Dendritic cell treated with granulocyte-macrophage colony-stimulating factor and Interleukin-4, amounts not matched to agents 40 ng/mL and 50 ng/mL, for 4 days (primary cell): ENCODE measurements at regions of chr5 and their contacts with region 1.

Region 1: GRCh38 chr5:181159286-181159829 is 12.0 kb downstream of the OR2V2 start:
- H3K4me3 Mint-ChIP-seq: no peak overlapping the region
- H3K27ac Mint-ChIP-seq: peak overlapping the region; percentile 64
- H3K4me1 Mint-ChIP-seq: peaks cover 26% of the 10 kb centered on the region
- H3K27me3 Mint-ChIP-seq: peaks cover 39% of the 10 kb centered on the region

Region 2: DNA sequence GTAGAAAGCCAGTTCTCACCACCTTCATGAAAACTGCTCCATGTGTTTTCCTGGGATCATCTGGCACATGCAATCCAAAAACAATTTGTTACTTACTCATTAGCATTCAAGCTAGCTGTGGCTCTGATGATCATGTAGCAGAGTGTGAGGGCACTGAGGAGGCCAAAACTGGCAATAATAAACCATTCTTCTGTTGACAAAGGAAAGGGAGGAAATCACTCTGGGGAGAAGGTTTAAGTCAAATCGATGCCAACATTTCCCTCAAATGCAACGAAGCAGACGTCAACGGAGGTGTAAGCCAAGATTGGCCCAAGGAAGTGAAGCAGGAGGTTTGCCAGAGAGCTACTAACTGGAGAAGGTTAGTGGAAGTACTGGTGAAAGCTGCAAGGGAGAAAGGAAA is 1196.0 kb before region 1 on chr5:
- intact Hi-C with region 1: no loop called
- H3K4me3 Mint-ChIP-seq: no peak overlapping the region
- H3K27ac Mint-ChIP-seq: no peak overlapping the region
- H3K4me1 Mint-ChIP-seq: peaks cover 43% of the 10 kb centered on the region
- H3K27me3 Mint-ChIP-seq: no peaks in the 10 kb centered on the region

Region 3: GRCh38 chr5:180784497-180785097 is 374.8 kb before region 1 on chr5:
- intact Hi-C with region 1: loop called (anchors 10 kb)
- H3K4me3 Mint-ChIP-seq: no peak overlapping the region
- H3K27ac Mint-ChIP-seq: no peak overlapping the region
- H3K4me1 Mint-ChIP-seq: peaks cover 67% of the 10 kb centered on the region
- H3K27me3 Mint-ChIP-seq: no peaks in the 10 kb centered on the region

Region 4: DNA sequence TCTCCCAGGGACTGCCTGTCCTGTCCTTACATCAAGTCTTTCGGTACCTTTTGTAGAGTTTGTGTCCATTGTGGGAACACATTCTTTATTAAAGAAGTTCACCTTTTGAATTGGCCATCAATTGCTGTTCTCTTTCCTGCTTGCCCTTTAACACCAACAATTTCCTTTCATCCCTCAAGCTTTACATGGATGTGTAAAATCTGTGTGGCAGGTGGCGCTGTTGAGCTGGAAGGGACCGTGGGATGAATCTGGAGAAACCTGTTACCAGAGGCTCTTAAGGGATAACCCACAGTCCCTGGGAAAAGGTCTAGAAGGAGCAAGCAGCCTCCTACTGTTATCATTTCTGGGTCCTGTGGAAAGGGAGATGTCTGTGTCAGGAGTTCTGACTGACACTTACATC is 290.4 kb before region 1 on chr5:
- intact Hi-C with region 1: loop called (anchors 5 kb)
- H3K4me3 Mint-ChIP-seq: no peak overlapping the region
- H3K27ac Mint-ChIP-seq: no peak overlapping the region
- H3K4me1 Mint-ChIP-seq: peaks cover 26% of the 10 kb centered on the region
- H3K27me3 Mint-ChIP-seq: peaks cover 13% of the 10 kb centered on the region

Region 5: DNA sequence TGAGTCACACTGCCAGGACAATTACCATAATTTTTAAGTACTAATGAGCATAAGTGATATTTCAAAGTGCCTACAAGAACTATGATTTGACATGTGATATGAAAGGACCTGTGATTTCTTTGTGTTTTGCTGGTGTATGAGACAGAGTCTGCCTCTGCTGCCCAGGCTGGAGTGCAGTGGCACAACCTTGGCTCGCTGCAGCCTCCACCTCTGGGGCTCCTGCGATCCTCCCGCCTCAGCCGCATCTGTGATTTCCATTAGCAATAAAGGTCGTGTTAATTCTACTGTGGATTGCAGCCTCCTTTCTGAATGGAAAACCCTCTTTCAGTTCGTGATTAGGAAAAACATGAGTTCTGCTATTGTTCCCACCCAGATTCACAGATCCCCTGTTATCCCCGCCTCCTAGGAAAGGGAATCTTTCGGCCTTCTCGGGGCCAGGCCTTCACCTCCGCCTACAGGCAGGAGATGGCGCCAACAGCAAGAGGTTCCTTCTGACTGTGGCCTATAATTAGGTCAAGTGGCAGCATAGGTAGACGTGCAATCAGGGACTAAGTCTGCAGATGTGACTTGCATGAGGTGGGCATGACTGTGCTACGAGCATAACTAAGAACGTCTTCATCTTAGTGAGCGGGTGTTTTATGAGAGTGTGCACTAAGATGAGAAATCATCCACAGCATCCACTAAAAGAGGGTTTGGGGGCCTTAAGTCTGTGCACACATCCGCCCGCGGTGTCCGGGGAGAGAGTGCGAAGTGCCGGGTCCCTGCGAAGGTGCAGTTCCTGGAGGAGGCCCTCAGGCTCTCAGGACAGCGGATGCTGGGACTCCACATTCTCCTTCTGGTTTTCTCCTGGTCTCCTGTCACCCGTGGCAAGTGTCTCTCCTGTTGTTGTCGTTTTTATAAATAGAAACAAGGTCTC is 22.6 kb after region 1 on chr5:
- intact Hi-C with region 1: loop called (anchors 2 kb)
- H3K4me3 Mint-ChIP-seq: no peak overlapping the region
- H3K27ac Mint-ChIP-seq: no peak overlapping the region
- H3K4me1 Mint-ChIP-seq: peaks cover 37% of the 10 kb centered on the region
- H3K27me3 Mint-ChIP-seq: peaks cover 46% of the 10 kb centered on the region